GM18951 (cell line): ENCODE measurements at regions of chr14 and their contacts with region 1.

Region 1: GRCh38 chr14:33859306-33859705 is 91.6 kb downstream of the EGLN3 start:
- POLR2A ChIP-seq: no peak

Region 2: GRCh38 chr14:34211732-34212131 is 352.4 kb after region 1 on chr14:
- in situ Hi-C with region 1: loop called (anchors 10 kb)
- POLR2A ChIP-seq: no peak